ENCODE measurements at regions of chr7 and their contacts with region 1.

Region 1: DNA sequence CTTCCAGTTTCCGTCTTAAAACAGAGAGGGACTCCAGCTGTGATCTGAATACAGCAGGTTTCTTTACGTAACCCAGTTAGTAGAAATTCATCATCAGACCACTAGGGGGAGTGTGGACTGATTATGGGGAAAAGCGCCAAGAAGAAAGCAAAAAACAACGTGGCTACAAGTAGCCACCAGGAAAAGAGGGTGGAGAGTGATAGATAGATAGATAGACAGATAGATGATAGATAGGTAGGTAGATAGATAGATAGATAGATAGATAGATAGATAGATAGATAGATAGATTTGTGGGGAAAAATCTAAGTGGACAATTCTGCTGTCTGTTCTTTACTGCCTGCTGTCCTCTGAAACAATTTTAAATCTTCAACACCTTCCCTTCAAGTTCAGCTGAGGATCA is 12.7 kb upstream of the AKR1B10 start:
- DNase-seq: peak; percentile 59
- ATAC-seq: peak; percentile 74
- H3K4me3 Mint-ChIP-seq: no peak overlapping the region
- H3K27ac Mint-ChIP-seq: no peak overlapping the region
- H3K4me1 Mint-ChIP-seq: peaks cover 5% of the 10 kb centered on the region
- H3K27me3 Mint-ChIP-seq: peaks cover 10% of the 10 kb centered on the region

Region 2: DNA sequence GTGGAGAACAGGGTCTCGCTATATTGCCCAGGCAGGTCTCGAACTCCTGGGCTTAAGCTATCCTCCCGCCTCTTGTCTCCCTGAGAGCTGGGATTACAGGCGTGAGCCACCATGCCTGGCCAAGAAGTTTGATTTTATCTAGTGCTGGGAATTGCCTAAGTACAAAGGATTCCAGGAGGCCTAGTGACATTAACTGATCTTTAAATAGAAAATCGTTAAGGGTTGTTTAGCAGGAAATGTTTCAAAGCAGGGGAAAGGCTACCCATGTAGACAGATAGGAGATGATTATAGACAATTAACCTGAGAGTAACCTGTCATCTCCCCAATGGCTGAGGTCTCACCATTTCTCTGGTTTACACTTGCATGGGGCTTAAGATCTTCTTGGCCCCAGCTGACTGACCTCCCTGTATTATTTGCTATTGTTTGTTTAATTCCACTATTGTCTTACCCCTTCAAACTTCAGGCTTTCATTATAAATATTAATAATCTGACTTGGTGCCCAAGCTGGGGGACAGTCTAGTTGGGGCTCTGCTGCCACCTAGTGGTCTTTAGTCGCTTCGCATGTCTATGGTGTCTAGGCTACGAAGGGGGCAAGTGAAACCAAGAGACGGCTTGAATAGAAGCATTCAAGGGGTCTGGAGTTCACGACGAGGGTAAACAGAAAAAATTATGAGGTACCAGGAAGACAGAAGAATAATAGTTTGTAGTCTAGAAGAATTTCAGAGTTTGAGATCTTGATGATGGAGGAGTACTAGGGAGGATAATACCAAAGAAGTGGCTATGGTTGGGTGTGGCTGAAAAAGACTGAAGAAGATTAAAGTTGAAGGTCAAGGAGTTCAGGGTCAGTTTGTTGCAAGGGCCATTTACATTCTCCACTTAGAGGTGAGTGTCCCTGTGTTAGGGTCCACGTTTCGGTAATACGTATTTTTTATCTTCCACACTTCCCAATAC is 91.6 kb after region 1 on chr7:
- CTCF ChIA-PET with region 1: interaction called, 30 read pairs
- POLR2A ChIA-PET with region 1: no interaction called
- DNase-seq: peak; percentile 75
- ATAC-seq: peak; percentile 98
- H3K4me3 Mint-ChIP-seq: peak overlapping the region; percentile 28
- H3K27ac Mint-ChIP-seq: no peak overlapping the region
- H3K4me1 Mint-ChIP-seq: peaks cover 4% of the 10 kb centered on the region
- H3K27me3 Mint-ChIP-seq: peaks cover 33% of the 10 kb centered on the region

Measured in activated CD8-positive, alpha-beta T cell treated with anti-CD3 and anti-CD28 coated beads, Interleukin-2, amount 10 ng/mL, durations not matched to agents 7 days and 5 days (primary cell).